Posterior cingulate gyrus (tissue), 11 donors: ENCODE measurements at regions of chr11 and their contacts with region 1.

Region 1: DNA sequence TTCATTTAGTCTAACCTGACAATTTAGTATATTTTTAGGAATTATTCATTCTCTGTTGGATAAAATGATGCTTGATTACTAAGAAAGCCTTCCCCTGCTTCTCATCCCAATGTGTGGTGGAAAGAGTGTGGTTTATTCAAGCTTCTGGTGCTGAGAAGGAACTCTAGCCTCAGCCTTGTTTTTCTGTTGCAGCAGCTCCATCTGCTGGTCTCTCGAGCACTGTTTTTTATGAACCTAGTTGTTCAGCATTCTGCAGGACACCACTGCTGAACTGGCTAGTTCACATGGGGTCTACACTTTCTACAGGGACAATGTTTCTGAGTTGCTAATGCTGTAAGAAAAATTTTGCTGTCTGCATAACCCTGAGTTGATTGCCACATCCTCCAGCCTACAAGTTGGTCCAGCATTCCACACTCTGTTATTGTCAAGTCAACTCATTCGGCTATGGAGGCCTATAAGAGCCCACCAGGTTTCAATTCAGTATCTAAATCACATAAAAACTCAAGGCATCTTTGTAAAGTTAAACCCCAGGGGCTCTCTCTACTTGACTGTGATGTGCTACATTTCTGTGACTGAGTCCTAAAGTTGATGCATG is 14.3 kb downstream of the OR2AG2 start:
- DNase-seq: peak in 8 of 10 donors; percentile 17 to 87 (median 60)

Region 2: GRCh38 chr11:6377902-6378639 is 379.4 kb before region 1 on chr11:
- intact Hi-C with region 1: loop called (anchors 5 kb)
- DNase-seq: no peak

Region 3: DNA sequence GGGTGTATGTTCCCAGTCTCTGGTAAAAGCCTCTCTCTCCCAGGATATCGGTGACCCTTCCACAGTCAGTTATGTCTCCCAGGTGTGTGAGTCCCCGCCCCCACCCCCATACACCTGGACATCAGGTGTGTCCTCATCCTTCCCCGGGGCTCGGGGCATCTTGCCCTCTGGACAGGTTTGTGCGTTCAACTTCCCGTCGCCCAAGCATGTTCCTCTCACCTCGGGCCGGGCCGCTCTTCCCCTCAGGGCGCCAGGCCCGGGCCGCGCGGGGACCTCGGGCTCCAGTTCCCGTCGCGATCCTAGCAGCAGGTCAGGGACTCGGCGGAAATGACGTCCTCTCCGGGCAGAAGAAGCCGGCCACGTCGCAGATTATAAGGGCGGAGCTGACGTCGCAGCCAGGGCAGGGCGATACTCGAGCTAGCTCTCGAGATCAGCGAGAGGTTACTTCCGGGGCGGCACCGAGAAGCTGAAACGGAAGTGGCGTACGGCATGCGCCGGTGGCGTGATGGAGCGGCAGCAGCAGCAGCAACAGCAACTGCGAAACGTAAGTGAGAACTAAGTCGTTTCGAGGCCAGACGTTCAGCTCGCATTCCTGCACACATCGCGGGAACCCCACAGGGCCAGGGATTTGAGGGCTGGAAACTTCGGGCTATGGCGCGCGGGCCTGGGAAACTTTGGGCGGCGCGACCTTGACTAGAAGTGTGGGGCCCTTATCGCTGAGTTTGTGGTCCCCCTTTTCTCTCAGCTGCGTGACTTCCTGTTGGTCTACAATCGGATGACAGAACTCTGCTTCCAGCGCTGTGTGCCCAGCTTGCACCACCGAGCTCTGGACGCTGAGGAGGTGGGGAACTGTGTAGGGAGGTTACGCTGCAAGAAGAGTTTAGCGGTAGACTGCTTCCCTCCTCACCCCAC is 276.2 kb before region 1 on chr11 and contains the starts of genes ARFIP2 and TIMM10B:
- intact Hi-C with region 1: loop called (anchors 5 kb)
- DNase-seq: peak; percentile 99 to 100 (median 100)

Region 4: GRCh38 chr11:6635082-6635932 is 122.2 kb before region 1 on chr11:
- intact Hi-C with region 1: no loop called
- DNase-seq: peak in 5 of 10 donors; percentile 45 to 92 (median 59)

Region 5: DNA sequence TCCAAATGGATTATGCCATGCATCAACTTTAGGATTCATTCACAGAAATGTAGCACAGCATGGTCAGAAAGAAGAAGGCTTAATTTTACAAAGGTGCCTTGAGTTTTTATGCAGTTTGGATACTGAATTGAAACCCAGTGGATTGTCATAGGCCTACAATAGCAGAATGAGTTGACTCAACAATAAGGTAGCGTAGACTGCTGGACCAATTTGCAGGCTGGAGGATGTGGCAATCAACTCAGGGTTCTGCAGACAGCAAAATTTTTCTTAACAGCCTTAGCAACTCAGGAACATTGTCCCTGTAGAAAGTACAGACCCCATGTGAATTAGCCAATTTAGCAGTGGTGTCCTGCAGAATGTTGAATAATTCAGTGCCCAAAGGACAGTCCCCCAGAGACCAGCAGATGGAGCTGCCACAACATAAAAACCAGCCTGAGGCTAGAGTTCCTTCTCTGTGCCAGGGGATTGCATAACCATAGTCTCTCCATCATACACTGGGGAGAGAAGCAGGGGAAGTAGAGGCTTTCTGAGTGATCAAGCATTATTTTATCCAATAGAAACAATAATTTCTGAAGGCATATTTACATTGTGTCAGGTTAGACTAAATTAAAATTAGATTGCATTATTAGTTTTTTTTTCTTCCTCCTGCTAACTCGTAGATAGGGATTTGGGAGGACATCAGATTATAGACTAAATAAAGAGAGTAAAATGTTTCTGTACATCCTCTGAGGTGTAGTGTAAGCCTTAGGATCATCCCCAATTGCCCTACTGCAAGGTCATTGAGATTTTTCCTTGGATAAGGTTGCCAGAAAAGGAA is 54.0 kb before region 1 on chr11:
- intact Hi-C with region 1: loop called (anchors 1 kb)
- DNase-seq: peak in 7 of 10 donors; percentile 22 to 91 (median 60)

Region 6: GRCh38 chr11:6717426-6717825 is 40.0 kb before region 1 on chr11:
- intact Hi-C with region 1: loop called (anchors 2 kb)
- DNase-seq: no peak